PC-3 (cell line): ENCODE measurements at regions of chr10 and their contacts with region 1.

Region 1: DNA sequence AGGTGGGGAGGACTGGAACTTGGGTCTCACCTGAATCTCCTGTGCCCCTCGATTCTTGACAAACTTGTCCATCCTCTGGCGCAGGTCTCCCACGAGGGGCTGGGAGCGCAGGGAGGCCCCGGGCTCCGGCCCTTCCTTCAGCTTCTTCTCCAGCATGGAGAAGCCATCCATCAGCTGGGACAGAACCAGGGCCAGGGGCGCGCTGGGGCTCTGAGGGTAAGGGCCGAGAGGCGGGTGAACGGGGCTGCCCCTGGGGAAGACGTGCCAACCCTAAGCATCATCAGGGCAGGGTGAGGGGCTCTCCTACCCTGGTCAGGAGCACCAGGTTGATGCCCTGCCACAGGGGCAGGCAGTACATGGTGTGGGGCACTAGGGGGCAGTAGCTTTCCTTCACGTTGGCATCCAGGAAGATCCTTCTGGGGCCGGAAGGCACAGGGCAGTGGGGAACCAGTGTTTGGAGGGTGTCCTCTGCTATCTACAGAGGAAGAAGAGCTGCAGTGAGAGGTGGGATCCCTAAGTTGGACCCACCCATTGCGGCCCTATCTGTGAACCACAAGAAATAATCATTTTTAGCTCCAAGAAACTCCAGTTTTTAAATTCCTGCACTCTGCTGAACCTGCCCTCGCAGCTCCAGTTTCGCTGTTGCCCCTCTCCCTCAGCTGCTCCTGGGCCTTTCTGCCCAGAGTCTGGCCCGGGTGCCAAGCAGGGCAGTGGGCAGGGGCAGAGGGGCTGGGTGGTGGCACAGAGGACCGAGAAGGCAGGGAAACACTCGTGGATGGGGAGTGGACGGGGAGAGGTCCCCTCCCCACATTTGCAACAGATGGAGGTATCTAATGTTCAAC is 10.8 kb upstream of the PYROXD2 start:
- DNase-seq: peak; percentile 54
- ATAC-seq: peak; percentile 88
- H3K4me3 ChIP-seq: no peak overlapping the region
- H3K27ac ChIP-seq: no peak overlapping the region
- H3K4me1 ChIP-seq: no peaks in the 10 kb centered on the region
- H3K27me3 ChIP-seq: no peaks in the 10 kb centered on the region
- CTCF ChIP-seq: peak; percentile 75

Region 2: DNA sequence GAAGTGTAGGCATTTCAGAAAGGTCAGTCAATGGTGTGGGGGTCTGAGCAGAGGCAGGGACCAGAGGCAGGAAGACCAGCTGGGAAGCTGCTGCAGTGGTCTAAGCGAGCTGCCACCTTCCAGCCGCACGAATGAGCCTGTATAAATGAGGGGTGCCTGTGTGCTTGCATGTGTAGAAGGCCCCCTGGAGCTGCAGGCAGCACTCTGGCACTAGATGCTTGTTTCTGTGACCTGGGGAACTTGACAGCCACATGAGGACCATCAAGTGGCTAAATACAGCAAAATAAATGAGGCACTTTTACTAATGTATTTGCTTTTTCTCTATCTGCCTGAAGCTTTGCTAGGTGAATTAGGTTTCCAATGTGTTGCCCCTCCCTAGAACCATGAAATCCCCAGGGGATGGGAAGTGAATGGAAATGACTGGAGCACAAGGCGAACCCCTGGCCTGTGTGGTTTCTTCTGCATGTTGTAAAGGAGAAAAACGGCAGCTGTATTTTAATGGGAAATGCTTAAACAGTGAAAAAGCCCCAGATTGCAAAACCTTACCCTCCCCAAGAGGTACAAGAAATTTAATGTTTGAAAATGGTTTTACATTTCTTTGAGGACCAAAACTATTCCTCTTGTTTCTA is 68.4 kb before region 1 on chr10:
- CTCF ChIA-PET with region 1: no interaction called
- POLR2A ChIA-PET with region 1: interaction called, 18 read pairs
- intact Hi-C with region 1: no loop called
- DNase-seq: no peak
- ATAC-seq: no peak
- H3K4me3 ChIP-seq: no peak overlapping the region
- H3K27ac ChIP-seq: no peak overlapping the region
- H3K4me1 ChIP-seq: no peaks in the 10 kb centered on the region
- H3K27me3 ChIP-seq: no peaks in the 10 kb centered on the region
- CTCF ChIP-seq: no peak

Region 3: DNA sequence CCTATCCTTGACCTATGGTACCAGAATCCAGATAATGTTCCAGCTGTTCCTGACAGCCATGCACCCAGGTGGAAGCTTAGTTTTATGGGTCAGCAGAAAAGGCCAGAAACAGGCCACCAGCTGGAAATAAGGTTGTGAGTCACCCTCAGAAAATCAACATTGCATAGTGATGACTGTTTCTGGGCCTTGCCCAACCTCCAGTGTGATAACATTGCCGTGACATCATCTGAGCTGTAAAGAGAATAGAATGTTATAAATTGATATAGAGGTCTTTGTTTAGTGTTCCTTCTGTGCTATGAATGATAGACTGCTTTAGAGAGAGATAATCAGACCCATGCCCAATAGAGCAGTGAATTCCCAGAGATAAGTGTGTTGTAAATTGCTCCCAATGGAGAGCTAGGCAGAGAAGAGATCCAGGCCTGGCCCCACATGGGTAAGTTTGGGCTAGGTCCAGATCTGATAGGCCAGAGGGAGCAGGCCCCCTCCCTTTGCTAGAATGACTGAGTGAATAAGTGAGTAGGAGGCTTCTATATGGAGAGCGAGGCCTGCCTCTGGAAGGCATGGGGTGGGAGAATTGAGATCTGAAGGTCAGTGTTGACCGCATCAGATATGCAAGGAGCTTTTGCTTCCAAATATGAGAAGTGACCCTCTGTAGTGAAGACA is 35.2 kb after region 1 on chr10:
- CTCF ChIA-PET with region 1: no interaction called
- POLR2A ChIA-PET with region 1: no interaction called
- intact Hi-C with region 1: loop called (anchors 2 kb)
- DNase-seq: peak; percentile 93
- ATAC-seq: peak; percentile 93
- H3K4me3 ChIP-seq: no peak overlapping the region
- H3K27ac ChIP-seq: peak overlapping the region; percentile 18
- H3K4me1 ChIP-seq: peaks cover 20% of the 10 kb centered on the region
- H3K27me3 ChIP-seq: no peaks in the 10 kb centered on the region
- CTCF ChIP-seq: no peak